ENCODE measurements at regions of chr3 and their contacts with region 1.

Region 1: DNA sequence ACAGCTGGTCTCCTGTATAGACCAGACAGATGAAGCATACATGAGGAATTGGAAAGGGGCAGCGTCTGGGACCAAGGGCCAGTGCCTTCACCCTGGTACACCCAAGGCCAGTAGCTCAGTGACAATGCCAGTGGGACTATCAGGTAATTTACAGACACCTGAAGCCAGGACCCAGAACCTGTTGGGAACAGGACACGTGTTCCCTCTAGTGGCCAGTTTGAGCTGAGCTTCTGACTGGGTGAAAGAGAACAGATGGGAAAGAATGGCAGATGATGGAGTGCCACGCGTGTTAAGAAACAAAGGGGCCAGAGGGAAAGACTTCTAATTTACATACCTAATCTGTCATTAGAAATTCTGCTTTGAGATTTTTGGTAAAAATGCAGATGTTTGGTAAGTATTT is 5.1 kb upstream of the SLC25A38 start:
- DNase-seq: peak; percentile 77
- H3K4me3 ChIP-seq: no peak overlapping the region
- H3K27ac ChIP-seq: no peak overlapping the region
- H3K4me1 ChIP-seq: peaks cover 28% of the 10 kb centered on the region
- CTCF ChIP-seq: peak; percentile 91

Region 2: DNA sequence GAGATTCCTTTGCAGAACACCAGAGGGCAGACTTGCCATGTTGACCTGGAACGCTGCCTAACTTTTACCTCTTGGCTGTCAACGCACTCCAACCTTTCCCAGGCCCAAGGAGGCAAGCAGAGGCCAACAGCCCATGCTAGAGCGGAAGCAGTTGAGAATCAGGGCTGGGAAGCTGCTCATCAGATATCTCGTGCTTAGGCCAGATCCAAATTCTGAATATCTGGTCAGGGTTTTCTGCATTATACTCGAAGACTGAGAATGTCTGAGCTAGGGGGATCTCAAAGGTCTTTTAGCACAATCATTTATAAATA is 188.2 kb before region 1 on chr3:
- CTCF ChIA-PET with region 1: no interaction called
- POLR2A ChIA-PET with region 1: no interaction called
- intact Hi-C with region 1: loop called (anchors 5 kb)
- DNase-seq: peak; percentile 80
- H3K4me3 ChIP-seq: no peak overlapping the region
- H3K27ac ChIP-seq: no peak overlapping the region
- H3K4me1 ChIP-seq: peaks cover 8% of the 10 kb centered on the region
- CTCF ChIP-seq: peak; percentile 91

Region 3: GRCh38 chr3:39260957-39261356 is 117.1 kb before region 1 on chr3:
- CTCF ChIA-PET with region 1: no interaction called
- POLR2A ChIA-PET with region 1: no interaction called
- intact Hi-C with region 1: no loop called
- DNase-seq: peak; percentile 65
- H3K4me3 ChIP-seq: no peak overlapping the region
- H3K27ac ChIP-seq: no peak overlapping the region
- H3K4me1 ChIP-seq: peaks cover 32% of the 10 kb centered on the region
- CTCF ChIP-seq: peak; percentile 58

Region 4: DNA sequence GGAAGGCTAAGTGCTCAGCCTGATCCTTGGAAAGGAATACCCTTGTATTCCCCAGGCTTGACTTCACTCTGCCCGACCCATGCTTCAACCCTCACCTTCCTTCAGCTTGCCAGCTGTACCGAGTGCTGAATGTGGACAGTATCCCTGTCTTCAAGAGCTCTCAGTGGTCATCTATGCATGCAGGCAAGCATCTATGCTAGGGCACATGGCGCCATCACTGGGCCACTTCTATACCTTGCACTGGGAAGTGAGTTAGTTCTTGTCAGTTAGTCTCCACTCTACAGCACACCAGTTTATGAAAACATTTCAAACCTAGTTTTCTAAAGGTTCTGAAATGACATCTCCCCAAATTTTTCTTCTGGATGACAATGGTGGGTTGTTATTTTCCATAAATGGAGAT is 349.3 kb after region 1 on chr3:
- CTCF ChIA-PET with region 1: no interaction called
- POLR2A ChIA-PET with region 1: no interaction called
- intact Hi-C with region 1: no loop called
- DNase-seq: no peak
- H3K4me3 ChIP-seq: no peak overlapping the region
- H3K27ac ChIP-seq: no peak overlapping the region
- H3K4me1 ChIP-seq: no peaks in the 10 kb centered on the region
- CTCF ChIP-seq: no peak